Naive thymus-derived CD4-positive, alpha-beta T cell (primary cell): ENCODE measurements at regions of chr1 and their contacts with region 1.

Region 1: DNA sequence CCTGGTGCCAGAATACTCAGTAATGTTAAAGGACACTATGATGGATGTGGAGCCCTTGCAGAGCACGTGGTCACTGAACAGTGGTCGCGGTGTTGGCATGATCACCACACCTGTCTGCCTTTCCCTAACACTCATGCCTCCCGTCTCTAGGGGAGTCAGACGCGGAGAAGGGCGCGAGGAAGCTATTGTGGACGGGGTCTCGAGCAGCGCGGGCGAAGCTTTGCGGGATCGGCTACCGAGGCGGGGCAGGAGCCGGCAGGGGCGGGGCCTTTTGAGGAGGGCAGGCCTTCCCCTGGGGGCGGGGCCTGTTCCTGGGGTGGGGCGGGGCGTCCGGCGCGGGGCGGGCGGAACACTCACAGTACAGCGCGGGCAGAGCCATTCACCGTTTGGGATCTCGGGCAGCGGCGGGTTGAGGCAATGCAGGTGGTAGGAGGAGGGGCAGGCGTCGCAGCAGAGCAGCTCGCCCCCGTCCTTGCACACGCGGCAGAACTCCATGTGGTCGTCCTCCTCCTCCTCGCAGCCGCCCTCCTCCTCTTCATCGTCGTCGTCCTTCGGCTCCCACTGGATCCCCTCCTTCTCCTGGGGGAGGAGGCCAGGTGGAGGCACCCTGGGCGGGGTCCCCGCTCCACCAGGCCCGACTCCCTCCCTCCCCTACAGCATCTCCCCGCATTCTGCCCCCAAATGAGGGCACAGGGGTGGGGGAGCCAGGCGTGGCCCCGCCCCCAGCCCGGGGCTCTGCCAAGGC is 31.5 kb downstream of the CHD5 start:
- DNase-seq: peak; percentile 21 to 80 (median 55)
- ATAC-seq: peak; percentile 92
- H3K4me3 ChIP-seq: no peak overlapping the region
- H3K4me3 Mint-ChIP-seq: peak overlapping the region in 6 of 10 donors; percentile 59 to 86 (median 78)
- H3K27ac ChIP-seq: no peak overlapping the region
- H3K27ac Mint-ChIP-seq: no peak overlapping the region
- H3K4me1 ChIP-seq: peaks cover 0 to 3% of the 10 kb centered on the region in 2 donors
- H3K4me1 Mint-ChIP-seq: peaks cover 0 to 17% (median 9%) of the 10 kb centered on the region in 7 donors
- H3K27me3 ChIP-seq: peaks cover 0 to 3% of the 10 kb centered on the region in 2 donors
- H3K27me3 Mint-ChIP-seq: peaks cover 0 to 10% (median 4%) of the 10 kb centered on the region in 5 donors

Region 2: GRCh38 chr1:6127587-6128163 is 21.0 kb before region 1 on chr1:
- CTCF ChIA-PET with region 1: no interaction called
- POLR2A ChIA-PET with region 1: no interaction called
- intact Hi-C with region 1: loop called in 1 of 2 experiments (anchors 2 kb)
- DNase-seq: peak; percentile 42 to 76 (median 67)
- ATAC-seq: peak; percentile 96
- H3K4me3 ChIP-seq: no peak overlapping the region
- H3K4me3 Mint-ChIP-seq: peak overlapping the region in 4 of 10 donors; percentile 25 to 73 (median 30)
- H3K27ac ChIP-seq: no peak overlapping the region
- H3K27ac Mint-ChIP-seq: no peak overlapping the region
- H3K4me1 ChIP-seq: peaks cover 0 to 3% of the 10 kb centered on the region in 2 donors
- H3K4me1 Mint-ChIP-seq: peaks cover 0 to 8% (median 0%) of the 10 kb centered on the region in 7 donors
- H3K27me3 ChIP-seq: no peaks in the 10 kb centered on the region
- H3K27me3 Mint-ChIP-seq: peaks cover 0 to 6% (median 0%) of the 10 kb centered on the region in 5 donors